GM23248 (cell line): ENCODE measurements at regions of chr4 and their contacts with region 1.

Region 1: DNA sequence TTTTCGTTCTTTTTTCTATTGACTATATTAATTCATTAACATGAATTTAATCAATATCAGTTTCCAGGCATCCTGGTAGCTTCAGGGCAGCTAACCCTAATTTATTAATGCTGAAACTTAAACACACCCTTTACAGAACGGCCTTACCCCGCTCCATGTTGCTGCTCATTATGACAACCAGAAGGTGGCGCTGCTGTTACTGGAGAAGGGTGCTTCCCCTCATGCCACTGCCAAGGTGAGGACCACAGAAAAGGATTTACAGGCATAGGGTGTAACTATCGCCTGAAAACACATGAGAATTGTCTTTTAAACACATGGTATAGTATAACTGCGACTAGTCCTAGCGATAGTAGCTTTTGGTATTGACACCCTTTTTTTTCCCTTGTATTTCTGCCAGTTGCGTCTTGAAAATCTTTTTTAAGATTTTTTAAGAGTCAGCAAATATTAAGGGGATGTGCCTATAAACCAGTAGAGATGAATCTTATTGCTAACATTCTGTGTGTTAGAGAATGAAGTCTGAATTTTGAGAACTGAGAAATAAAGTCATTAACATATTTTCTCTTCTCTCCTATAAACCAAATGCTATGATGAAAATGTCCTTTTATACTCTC is 229.0 kb downstream of the ANK2 start:
- DNase-seq: peak; percentile 86
- H3K4me3 ChIP-seq: no peak overlapping the region
- H3K27ac ChIP-seq: no peak overlapping the region
- H3K4me1 ChIP-seq: peaks cover 15% of the 10 kb centered on the region
- H3K27me3 ChIP-seq: no peaks in the 10 kb centered on the region

Region 2: GRCh38 chr4:113116414-113117357 is 161.7 kb before region 1 on chr4:
- in situ Hi-C with region 1: loop called (anchors 10 kb)
- DNase-seq: no peak
- H3K4me3 ChIP-seq: no peak overlapping the region
- H3K27ac ChIP-seq: no peak overlapping the region
- H3K4me1 ChIP-seq: no peaks in the 10 kb centered on the region
- H3K27me3 ChIP-seq: no peaks in the 10 kb centered on the region

Region 3: DNA sequence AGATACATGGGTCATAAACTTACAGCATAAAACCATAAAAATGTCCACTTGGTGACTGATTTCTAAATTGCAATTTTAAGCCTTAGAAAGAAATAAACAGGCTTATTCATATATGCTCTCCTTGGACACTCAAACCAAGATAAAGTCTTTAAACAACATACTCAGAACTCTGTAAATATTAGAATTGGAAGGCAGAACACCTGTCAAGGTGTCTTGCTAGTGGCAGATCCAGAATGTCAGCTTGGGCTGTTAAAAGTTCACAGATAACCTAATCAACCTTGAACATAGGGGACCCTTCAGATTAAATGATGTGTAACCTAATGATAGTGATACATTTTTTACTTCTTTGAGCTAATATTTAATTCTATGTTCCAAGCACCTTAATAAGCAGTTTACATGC is 909.2 kb after region 1 on chr4:
- in situ Hi-C with region 1: no loop called
- DNase-seq: no peak
- H3K4me3 ChIP-seq: no peak overlapping the region
- H3K27ac ChIP-seq: no peak overlapping the region
- H3K4me1 ChIP-seq: no peaks in the 10 kb centered on the region
- H3K27me3 ChIP-seq: no peaks in the 10 kb centered on the region